ENCODE measurements at regions of chr12 and their contacts with region 1.

Region 1: GRCh38 chr12:68610370-68611093 is at the start of gene RAP1B:
- DNase-seq: peak; percentile 82
- ATAC-seq: peak; percentile 82
- H3K4me3 Mint-ChIP-seq: peak within 1 kb of the TSS; percentile 95
- H3K27ac Mint-ChIP-seq: peak within 1 kb of the TSS; percentile 99
- H3K4me1 Mint-ChIP-seq: peaks cover 48% of the 10 kb centered on the region
- H3K27me3 Mint-ChIP-seq: no peaks in the 10 kb centered on the region
- CTCF ChIP-seq: no peak
- total RNA-seq, gene RAP1B: 136 and 142 TPM in 2 replicates

Region 2: DNA sequence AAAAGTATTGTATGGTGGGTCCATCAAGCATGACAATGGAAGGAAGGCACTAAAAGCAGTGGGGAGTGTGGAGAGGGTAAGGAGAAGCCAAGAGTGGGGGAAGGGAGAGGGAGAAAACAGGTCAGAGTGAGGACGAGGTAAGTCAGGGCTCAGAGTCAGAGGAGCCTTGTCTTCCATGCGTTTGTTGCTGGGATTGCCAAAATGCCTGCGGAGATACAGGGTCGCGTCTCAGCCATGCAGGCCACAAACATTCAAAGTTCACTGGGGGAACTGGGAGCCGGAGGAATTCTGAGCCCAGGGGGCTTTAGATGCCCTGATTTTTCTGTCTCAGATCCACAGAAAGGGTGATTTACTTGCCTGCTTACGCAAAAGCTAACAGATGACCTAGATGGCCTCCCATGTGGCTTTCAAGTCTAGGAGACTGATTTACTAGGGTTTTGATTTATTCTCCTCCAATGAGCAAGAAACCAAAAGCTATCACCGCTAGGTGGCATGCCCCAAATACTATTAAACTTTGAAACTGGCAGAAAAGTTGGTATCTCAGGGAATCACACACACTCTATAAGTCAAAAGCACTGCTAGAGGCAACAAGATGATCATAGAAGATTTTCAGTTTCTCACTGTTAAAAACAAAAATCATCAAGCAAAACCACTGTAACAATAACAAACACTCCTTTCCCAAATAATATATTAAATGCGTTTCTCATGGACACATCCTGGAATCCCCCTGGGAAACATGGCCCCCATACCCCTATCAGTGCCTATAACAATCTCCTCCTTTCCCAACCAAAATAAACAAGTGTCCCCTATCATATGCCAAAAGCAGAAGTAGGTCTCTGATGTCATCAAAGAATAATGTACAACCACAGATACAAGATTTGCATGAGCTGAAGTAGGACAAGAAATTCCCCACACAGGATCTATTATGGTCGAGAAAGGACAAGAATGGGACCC is 251.7 kb before region 1 on chr12:
- CTCF ChIA-PET with region 1: interaction called, 11 read pairs
- POLR2A ChIA-PET with region 1: interaction called, 29 read pairs
- intact Hi-C with region 1: loop called (anchors 1 kb)
- DNase-seq: no peak
- ATAC-seq: peak; percentile 81
- H3K4me3 Mint-ChIP-seq: peak overlapping the region; percentile 62
- H3K27ac Mint-ChIP-seq: peak overlapping the region; percentile 92
- H3K4me1 Mint-ChIP-seq: peaks cover 28% of the 10 kb centered on the region
- H3K27me3 Mint-ChIP-seq: no peaks in the 10 kb centered on the region
- CTCF ChIP-seq: no peak

Region 3: DNA sequence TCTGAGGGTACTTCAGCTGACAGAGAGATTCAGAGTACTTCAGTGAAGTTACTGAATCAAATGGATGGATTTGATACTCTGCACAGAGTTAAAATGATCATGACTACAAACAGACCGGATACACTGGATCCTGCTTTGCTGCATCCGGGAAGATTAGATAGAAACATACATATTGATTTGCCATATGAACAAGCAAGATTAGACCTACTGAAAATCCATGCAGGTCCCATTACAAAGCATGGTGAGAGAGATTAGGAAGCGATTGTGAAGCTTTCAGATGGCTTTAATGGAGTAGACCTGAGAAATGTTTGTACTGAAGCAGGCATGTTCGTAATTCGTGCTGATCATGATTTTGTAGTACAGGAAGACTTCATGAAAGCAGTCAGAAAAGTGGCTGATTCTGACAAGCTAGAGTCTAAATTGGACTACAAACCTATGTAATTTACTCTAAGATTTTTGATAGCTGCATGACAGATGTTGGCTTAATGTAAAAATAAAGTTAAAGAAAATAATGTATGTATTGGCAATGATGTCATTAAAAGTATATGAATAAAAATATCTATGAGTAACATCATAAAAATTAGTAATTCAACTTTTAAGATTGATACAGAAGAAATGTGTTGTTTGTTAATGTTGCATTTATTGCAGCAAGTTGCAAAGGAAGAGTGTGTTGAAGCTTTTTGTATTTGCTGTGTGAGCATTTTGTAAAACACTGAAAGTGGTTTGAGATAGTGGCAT is 135.9 kb before region 1 on chr12:
- CTCF ChIA-PET with region 1: no interaction called
- POLR2A ChIA-PET with region 1: no interaction called
- intact Hi-C with region 1: no loop called
- DNase-seq: no peak
- ATAC-seq: no peak
- H3K4me3 Mint-ChIP-seq: no peak overlapping the region
- H3K27ac Mint-ChIP-seq: no peak overlapping the region
- H3K4me1 Mint-ChIP-seq: peaks cover 15% of the 10 kb centered on the region
- H3K27me3 Mint-ChIP-seq: no peaks in the 10 kb centered on the region
- CTCF ChIP-seq: no peak

Region 4: GRCh38 chr12:68557011-68557730 is 53.4 kb before region 1 on chr12:
- CTCF ChIA-PET with region 1: no interaction called
- POLR2A ChIA-PET with region 1: no interaction called
- intact Hi-C with region 1: no loop called
- DNase-seq: no peak
- ATAC-seq: no peak
- H3K4me3 Mint-ChIP-seq: no peak overlapping the region
- H3K27ac Mint-ChIP-seq: no peak overlapping the region
- H3K4me1 Mint-ChIP-seq: no peaks in the 10 kb centered on the region
- H3K27me3 Mint-ChIP-seq: peaks cover 4% of the 10 kb centered on the region
- CTCF ChIP-seq: no peak

Region 5: GRCh38 chr12:68587448-68587873 is 23.1 kb before region 1 on chr12:
- CTCF ChIA-PET with region 1: no interaction called
- POLR2A ChIA-PET with region 1: interaction called, 10 read pairs
- intact Hi-C with region 1: loop called (anchors 1 kb)
- DNase-seq: no peak
- ATAC-seq: peak; percentile 90
- H3K4me3 Mint-ChIP-seq: no peak overlapping the region
- H3K27ac Mint-ChIP-seq: peak overlapping the region; percentile 14
- H3K4me1 Mint-ChIP-seq: peaks cover 37% of the 10 kb centered on the region
- H3K27me3 Mint-ChIP-seq: no peaks in the 10 kb centered on the region
- CTCF ChIP-seq: no peak

Region 6: GRCh38 chr12:68633614-68634529 is 23.3 kb after region 1 on chr12:
- CTCF ChIA-PET with region 1: no interaction called
- POLR2A ChIA-PET with region 1: interaction called, 7 read pairs
- intact Hi-C with region 1: loop called (anchors 1 kb)
- DNase-seq: no peak
- ATAC-seq: peak; percentile 68
- H3K4me3 Mint-ChIP-seq: peak overlapping the region; percentile 32
- H3K27ac Mint-ChIP-seq: peak overlapping the region; percentile 68
- H3K4me1 Mint-ChIP-seq: peaks cover 93% of the 10 kb centered on the region
- H3K27me3 Mint-ChIP-seq: no peaks in the 10 kb centered on the region
- CTCF ChIP-seq: no peak

Region 7: DNA sequence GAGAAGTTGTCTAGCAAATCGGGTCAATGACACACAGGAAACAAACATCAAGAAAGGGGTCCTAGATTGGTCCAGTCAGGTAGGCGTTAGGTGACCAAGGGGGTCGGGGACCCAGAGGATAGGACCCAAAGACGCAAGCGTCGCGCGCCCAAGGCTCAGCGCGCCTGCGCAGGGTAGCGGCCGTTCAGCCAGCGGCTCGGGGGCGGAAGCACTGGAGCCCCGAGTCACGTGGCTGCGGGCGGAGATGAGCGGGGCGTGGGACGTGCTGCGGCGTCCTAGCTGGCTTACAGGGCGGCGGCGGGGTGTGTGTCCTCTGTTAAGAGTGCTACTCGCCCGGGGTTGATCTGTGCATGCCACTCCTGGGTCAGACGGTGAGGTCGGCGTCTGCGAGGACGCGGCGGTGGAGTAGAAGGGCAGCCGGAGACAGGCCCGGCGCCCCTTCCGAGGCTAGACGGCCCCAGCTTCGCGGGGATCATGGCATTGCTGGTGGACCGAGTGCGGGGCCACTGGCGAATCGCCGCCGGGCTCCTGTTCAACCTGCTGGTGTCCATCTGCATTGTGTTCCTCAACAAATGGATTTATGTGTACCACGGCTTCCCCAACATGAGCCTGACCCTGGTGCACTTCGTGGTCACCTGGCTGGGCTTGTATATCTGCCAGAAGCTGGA is 135.5 kb after region 1 on chr12 and contains the start of gene SLC35E3:
- CTCF ChIA-PET with region 1: no interaction called
- POLR2A ChIA-PET with region 1: interaction called, 10 read pairs
- intact Hi-C with region 1: loop called (anchors 1 kb)
- DNase-seq: peak; percentile 88
- ATAC-seq: peak; percentile 96
- H3K4me3 Mint-ChIP-seq: peak within 1 kb of the TSS; percentile 98
- H3K27ac Mint-ChIP-seq: peak within 1 kb of the TSS; percentile 95
- H3K4me1 Mint-ChIP-seq: peaks cover 50% of the 10 kb centered on the region
- H3K27me3 Mint-ChIP-seq: no peaks in the 10 kb centered on the region
- CTCF ChIP-seq: no peak
- total RNA-seq, gene SLC35E3: 7.8 and 9.5 TPM in 2 replicates